Psoas muscle (tissue), 8 donors: ENCODE measurements at regions of chr19 and their contacts with region 1.

Region 1: GRCh38 chr19:11964858-11965645 is at the start of gene ZNF763:
- DNase-seq: peak; percentile 92 to 94
- ATAC-seq: peak; percentile 96 to 99 (median 98)
- H3K4me3 ChIP-seq: peak within 1 kb of the TSS; percentile 71
- H3K27ac ChIP-seq: peak within 1 kb of the TSS; percentile 63
- H3K4me1 ChIP-seq: peaks cover 10% of the 10 kb centered on the region
- H3K27me3 ChIP-seq: no peaks in the 10 kb centered on the region
- CTCF ChIP-seq: no peak
- total RNA-seq, gene ZNF763: 0.22 to 1.6 (median 0.81) TPM

Region 2: DNA sequence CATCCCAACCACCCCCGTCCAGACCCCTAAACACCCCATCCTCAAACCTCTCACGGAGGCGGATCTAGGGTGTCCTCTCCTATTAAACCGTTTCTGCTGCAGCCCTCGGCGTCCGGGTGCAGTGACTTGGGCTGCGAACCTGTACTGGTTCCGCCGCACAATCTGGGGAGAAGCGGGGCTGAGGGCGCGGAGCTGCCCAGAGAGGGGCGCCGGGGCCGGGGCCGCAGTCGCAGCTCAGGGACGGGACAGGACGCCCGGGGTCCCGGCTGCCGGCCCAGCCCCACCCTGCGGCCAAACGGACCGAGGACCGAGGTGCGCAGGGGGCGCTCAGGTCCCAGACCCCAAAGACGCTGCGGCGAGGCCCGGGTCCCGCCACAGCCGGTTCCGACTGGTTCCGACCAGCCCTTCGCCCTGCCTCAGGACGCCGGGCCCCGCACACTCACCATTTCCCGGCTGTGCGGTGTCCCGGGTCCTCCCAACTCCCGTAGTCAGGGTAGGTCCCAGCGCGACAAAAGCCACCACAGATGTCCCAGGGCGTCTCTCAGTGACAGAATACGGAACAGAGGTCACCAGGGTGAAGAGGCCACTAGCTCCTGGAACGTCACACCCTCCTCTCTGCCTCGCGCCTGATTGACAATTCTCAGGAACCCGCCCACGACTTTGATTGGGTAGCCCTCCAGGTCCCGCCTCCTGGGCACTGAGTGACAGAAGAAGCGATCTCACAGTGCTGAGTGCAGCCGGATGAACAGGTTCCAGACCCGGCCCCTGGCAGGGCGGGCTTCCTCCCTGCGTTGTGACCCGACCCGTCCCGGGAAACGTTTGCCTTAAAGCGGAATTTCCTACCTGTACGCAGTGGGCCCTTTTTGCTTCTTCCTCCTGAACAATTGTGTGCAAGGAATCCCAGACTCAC is 329.5 kb after region 1 on chr19 and contains the start of gene ZNF44:
- intact Hi-C with region 1: loop called in 1 of 2 experiments (anchors 10 kb)
- DNase-seq: peak; percentile 98
- ATAC-seq: peak; percentile 98 to 99 (median 99)
- H3K4me3 ChIP-seq: peak within 1 kb of the TSS; percentile 100
- H3K27ac ChIP-seq: peak within 1 kb of the TSS; percentile 98
- H3K4me1 ChIP-seq: peaks cover 18% of the 10 kb centered on the region
- H3K27me3 ChIP-seq: no peaks in the 10 kb centered on the region
- CTCF ChIP-seq: no peak
- total RNA-seq, gene ZNF44: 2.9 to 8.3 (median 6.0) TPM